B cell (primary cell): ENCODE measurements at regions of chr14 and their contacts with region 1.

Region 1: DNA sequence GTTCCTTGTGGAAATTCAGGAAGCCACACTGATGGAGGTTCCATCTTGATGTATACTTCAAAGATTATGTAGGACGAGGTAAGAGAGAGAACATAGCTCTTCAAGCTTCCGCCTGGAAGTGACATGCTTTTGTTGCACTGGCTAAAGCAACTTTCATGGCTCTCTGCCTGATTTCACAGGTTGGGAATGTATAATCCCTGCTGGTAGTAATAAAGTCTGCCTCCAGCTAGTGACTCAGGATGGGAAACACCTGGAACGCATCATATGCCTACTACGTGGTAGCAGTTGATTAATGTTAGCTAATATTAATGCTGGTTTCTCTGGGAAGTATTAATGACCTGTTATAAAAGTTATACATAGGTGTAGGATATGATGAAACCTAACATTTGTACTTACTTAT is 71.1 kb downstream of the PELI2 start:
- DNase-seq: no peak
- ATAC-seq: no peak
- H3K4me3 ChIP-seq: no peak overlapping the region
- H3K4me3 Mint-ChIP-seq: no peak overlapping the region
- H3K27ac ChIP-seq: no peak overlapping the region
- H3K27ac Mint-ChIP-seq: no peak overlapping the region
- H3K4me1 ChIP-seq: peaks cover 5 to 6% of the 10 kb centered on the region in 2 donors
- H3K4me1 Mint-ChIP-seq: peaks cover 9% of the 10 kb centered on the region
- H3K27me3 ChIP-seq: no peaks in the 10 kb centered on the region
- H3K27me3 Mint-ChIP-seq: no peaks in the 10 kb centered on the region
- CTCF ChIP-seq: no peak

Region 2: DNA sequence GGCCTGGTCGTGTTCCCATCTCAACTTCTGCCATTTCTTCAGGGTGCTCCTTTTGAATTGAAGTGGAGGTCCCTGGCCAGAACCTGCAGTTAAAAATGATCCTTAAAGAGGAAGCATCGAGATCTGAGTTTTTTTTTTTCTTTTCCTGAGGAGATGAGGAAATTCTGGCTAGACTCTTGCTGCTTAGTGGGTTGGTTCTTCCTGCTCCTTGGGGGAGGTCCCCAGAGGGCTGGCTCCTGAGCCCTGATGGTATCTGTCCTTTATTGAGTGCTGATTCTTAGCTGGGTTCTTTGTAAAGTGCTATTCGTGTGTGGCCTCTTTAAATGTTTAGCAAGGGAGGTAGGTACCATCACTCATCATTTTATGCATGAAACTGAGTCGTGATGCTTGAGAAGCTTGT is 59.4 kb before region 1 on chr14:
- CTCF ChIA-PET with region 1: no interaction called
- POLR2A ChIA-PET with region 1: no interaction called
- intact Hi-C with region 1: loop called (anchors 10 kb)
- DNase-seq: no peak
- ATAC-seq: no peak
- H3K4me3 ChIP-seq: no peak overlapping the region
- H3K4me3 Mint-ChIP-seq: no peak overlapping the region
- H3K27ac ChIP-seq: no peak overlapping the region
- H3K27ac Mint-ChIP-seq: no peak overlapping the region
- H3K4me1 ChIP-seq: peaks cover 13 to 18% of the 10 kb centered on the region in 2 donors
- H3K4me1 Mint-ChIP-seq: peaks cover 49% of the 10 kb centered on the region
- H3K27me3 ChIP-seq: no peaks in the 10 kb centered on the region
- H3K27me3 Mint-ChIP-seq: peaks cover 3% of the 10 kb centered on the region
- CTCF ChIP-seq: no peak

Region 3: GRCh38 chr14:56216626-56217379 is 27.5 kb after region 1 on chr14:
- CTCF ChIA-PET with region 1: no interaction called
- POLR2A ChIA-PET with region 1: no interaction called
- intact Hi-C with region 1: no loop called
- DNase-seq: no peak
- ATAC-seq: no peak
- H3K4me3 ChIP-seq: no peak overlapping the region
- H3K4me3 Mint-ChIP-seq: no peak overlapping the region
- H3K27ac ChIP-seq: no peak overlapping the region
- H3K27ac Mint-ChIP-seq: no peak overlapping the region
- H3K4me1 ChIP-seq: peaks cover 0 to 3% of the 10 kb centered on the region in 2 donors
- H3K4me1 Mint-ChIP-seq: peaks cover 7% of the 10 kb centered on the region
- H3K27me3 ChIP-seq: no peaks in the 10 kb centered on the region
- H3K27me3 Mint-ChIP-seq: peaks cover 5% of the 10 kb centered on the region
- CTCF ChIP-seq: no peak